AG04450 (cell line): ENCODE measurements at regions of chr1 and their contacts with region 1.

Region 1: GRCh38 chr1:147273409-147274336 is 31.2 kb downstream of the CHD1L start:
- DNase-seq: peak; percentile 65
- H3K4me3 ChIP-seq: peak overlapping the region; percentile 22
- H3K27ac ChIP-seq: peak overlapping the region; percentile 87
- H3K27me3 ChIP-seq: no peaks in the 10 kb centered on the region
- CTCF ChIP-seq: peak; percentile 44

Region 2: GRCh38 chr1:147072370-147073061 is 201.2 kb before region 1 on chr1:
- CTCF ChIA-PET with region 1: no interaction called
- POLR2A ChIA-PET with region 1: no interaction called
- DNase-seq: no peak
- H3K4me3 ChIP-seq: peak overlapping the region; percentile 17; the same call in 1 of the 2 replicates
- H3K27ac ChIP-seq: no peak overlapping the region
- H3K27me3 ChIP-seq: peaks cover 47% of the 10 kb centered on the region
- CTCF ChIP-seq: no peak

Region 3: GRCh38 chr1:147217160-147217559 is 56.5 kb before region 1 on chr1:
- CTCF ChIA-PET with region 1: no interaction called
- POLR2A ChIA-PET with region 1: no interaction called
- DNase-seq: no peak
- H3K4me3 ChIP-seq: no peak overlapping the region
- H3K27ac ChIP-seq: no peak overlapping the region
- H3K27me3 ChIP-seq: no peaks in the 10 kb centered on the region
- CTCF ChIP-seq: no peak

Region 4: GRCh38 chr1:147292631-147293251 is 19.1 kb after region 1 on chr1:
- CTCF ChIA-PET with region 1: interaction called, 22 read pairs
- POLR2A ChIA-PET with region 1: interaction called, 3 read pairs
- DNase-seq: peak; percentile 86
- H3K4me3 ChIP-seq: no peak overlapping the region
- H3K27ac ChIP-seq: peak overlapping the region; percentile 100
- H3K27me3 ChIP-seq: no peaks in the 10 kb centered on the region
- CTCF ChIP-seq: no peak

Region 5: DNA sequence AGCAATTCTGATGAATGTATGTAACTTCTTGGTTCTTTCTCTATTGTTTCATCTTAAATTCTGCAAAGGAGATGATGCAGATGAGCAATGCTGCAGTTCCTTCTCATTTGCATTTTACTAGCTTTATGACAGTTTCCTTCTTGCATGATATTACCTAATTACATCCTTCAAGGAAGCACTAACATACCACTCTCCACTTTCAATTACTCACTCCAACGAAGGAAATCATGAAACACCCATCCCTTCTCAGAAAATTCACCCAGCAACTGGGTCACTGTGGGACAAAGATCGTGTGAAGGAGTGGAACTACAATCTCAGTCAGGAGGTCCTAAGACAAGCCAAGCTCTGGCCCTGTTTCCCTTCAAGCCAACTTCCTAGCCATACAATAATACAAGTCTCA is 111.1 kb after region 1 on chr1:
- CTCF ChIA-PET with region 1: interaction called, 123 read pairs
- POLR2A ChIA-PET with region 1: no interaction called
- DNase-seq: no peak
- H3K4me3 ChIP-seq: no peak overlapping the region
- H3K27ac ChIP-seq: no peak overlapping the region
- H3K27me3 ChIP-seq: no peaks in the 10 kb centered on the region
- CTCF ChIP-seq: no peak

Region 6: GRCh38 chr1:147389532-147390524 is 116.2 kb after region 1 on chr1:
- CTCF ChIA-PET with region 1: interaction called, 123 read pairs
- POLR2A ChIA-PET with region 1: no interaction called
- DNase-seq: peak; percentile 27
- H3K4me3 ChIP-seq: no peak overlapping the region
- H3K27ac ChIP-seq: no peak overlapping the region
- H3K27me3 ChIP-seq: no peaks in the 10 kb centered on the region
- CTCF ChIP-seq: peak; percentile 87